Body of pancreas (tissue), 4 donors: ENCODE measurements at regions of chr13 and their contacts with region 1.

Region 1: DNA sequence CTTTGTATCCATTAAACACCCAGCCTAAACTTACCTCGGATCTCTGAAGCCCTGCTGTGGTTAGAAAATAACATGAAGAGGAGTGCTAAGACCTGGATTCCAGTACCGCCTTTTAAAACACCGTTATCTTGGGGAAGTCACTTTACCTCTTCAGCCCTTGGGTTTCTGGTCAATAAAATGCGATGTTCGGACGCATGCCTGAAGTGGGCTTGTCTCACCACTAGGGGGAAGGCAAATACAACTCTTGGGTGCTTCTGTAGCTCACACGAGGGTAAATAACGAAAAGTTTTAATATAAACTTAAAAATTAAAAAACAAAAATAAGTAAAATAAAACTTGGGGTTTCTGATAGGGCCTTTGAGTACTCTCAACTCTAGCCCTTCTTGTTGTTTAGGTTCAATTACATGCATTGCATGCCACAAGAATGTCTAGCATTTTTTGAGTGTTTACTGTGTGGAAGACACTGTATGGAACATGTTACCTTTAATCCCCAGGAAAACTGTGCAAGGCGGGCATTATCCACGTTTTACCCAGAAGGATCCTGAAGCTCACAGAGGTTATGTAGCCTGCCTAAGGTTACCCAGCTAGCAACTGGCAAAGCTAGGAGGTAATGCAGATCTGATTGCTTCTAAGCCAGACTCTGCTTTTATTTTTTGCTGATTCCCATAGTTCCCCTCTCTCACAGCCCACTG is 240.4 kb downstream of the LMO7 start:
- DNase-seq: peak; percentile 52 to 67 (median 59)
- ATAC-seq: peak; percentile 87
- H3K4me3 ChIP-seq: no peak overlapping the region
- H3K27ac ChIP-seq: no peak overlapping the region
- H3K4me1 ChIP-seq: no peaks in the 10 kb centered on the region
- H3K27me3 ChIP-seq: no peaks in the 10 kb centered on the region
- CTCF ChIP-seq: peak; percentile 78 to 91 (median 88)
- POLR2A ChIP-seq: no peak

Region 2: DNA sequence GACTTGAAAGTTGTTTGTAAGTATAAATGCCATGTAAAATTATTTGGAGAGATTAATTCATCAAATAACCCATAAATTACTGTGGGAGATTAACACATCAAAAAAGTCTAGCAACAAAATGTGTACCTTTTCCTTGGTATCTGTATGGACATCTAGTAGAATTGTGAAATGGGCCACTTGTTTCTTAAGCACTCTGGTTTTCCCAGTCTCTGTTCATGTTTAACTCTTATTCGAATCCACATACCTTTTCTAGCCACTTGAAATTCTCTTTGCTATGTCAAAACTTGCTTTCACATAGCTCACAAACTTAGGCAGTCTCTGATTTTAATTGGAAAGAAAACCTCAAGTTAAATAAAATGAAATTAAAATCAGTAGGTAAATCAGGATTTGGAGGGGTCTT is 230.3 kb after region 1 on chr13:
- intact Hi-C with region 1: no loop called
- DNase-seq: no peak
- ATAC-seq: no peak
- H3K4me3 ChIP-seq: no peak overlapping the region
- H3K27ac ChIP-seq: no peak overlapping the region
- H3K4me1 ChIP-seq: no peaks in the 10 kb centered on the region
- H3K27me3 ChIP-seq: no peaks in the 10 kb centered on the region
- CTCF ChIP-seq: no peak
- POLR2A ChIP-seq: no peak

Region 3: DNA sequence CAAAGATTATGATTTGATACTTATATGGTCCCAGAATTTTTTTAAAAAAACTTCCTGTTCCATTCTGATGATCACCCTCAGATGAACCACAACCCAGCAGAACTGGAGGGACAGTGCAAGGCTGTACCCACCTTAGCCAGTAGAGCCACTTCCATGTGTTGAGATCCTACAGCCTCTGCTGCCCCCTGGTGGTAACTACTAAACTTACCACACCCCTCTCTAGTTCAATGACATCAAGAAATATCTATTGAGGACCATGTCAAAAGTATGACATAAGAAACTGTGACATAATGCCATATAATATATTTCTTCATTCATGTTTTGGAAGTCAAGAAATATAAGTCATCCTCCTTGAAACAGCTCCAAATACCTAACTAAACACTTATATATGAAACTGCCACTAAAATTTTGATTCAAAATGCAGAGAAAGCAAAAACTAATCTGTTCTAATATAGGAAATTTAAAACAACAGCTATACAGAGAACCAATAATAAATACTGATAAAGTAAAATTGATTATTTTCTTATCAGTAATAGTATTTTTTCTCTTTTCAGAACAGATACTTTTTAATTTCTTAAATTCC is 597.1 kb after region 1 on chr13:
- intact Hi-C with region 1: loop called (anchors 5 kb)
- DNase-seq: peak; percentile 76 to 80 (median 80)
- ATAC-seq: peak; percentile 88
- H3K4me3 ChIP-seq: no peak overlapping the region
- H3K27ac ChIP-seq: no peak overlapping the region
- H3K4me1 ChIP-seq: no peaks in the 10 kb centered on the region
- H3K27me3 ChIP-seq: no peaks in the 10 kb centered on the region
- CTCF ChIP-seq: peak; percentile 57 to 95 (median 87)
- POLR2A ChIP-seq: no peak

Region 4: DNA sequence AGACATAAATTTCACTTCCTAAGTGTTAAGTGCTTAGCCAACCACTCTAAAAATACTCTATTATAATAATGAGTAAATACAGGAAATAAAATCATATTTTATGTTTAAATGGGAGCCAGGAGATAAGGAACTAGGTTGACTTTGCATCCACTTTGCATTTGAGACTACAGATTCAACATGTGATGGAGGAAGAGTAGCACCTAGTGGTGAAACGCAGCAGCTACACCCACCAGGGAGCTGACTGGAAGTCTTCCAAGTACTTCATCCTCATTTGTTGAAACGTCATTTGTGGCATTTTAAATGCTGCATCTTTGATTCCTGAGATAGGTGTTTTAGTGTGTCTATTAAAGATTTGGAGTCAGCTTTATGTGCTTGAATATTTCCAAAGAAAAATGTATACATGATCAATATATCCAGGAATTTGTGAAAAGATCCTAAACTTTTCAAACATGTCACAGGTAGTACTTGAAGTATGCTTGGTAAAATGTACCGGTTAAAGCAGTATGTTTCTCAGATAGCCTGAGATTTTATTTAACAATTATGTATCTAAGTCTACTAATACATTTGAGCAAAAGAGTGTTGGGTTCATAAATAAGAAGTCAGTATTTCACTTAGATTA is 1027.1 kb after region 1 on chr13:
- intact Hi-C with region 1: loop called (anchors 10 kb)
- DNase-seq: peak; percentile 64 to 73 (median 69)
- ATAC-seq: peak; percentile 92
- H3K4me3 ChIP-seq: no peak overlapping the region
- H3K27ac ChIP-seq: no peak overlapping the region
- H3K4me1 ChIP-seq: no peaks in the 10 kb centered on the region
- H3K27me3 ChIP-seq: no peaks in the 10 kb centered on the region
- CTCF ChIP-seq: peak; percentile 90 to 99 (median 93)
- POLR2A ChIP-seq: no peak